ENCODE measurements at regions of chr4 and their contacts with region 1.

Region 1: DNA sequence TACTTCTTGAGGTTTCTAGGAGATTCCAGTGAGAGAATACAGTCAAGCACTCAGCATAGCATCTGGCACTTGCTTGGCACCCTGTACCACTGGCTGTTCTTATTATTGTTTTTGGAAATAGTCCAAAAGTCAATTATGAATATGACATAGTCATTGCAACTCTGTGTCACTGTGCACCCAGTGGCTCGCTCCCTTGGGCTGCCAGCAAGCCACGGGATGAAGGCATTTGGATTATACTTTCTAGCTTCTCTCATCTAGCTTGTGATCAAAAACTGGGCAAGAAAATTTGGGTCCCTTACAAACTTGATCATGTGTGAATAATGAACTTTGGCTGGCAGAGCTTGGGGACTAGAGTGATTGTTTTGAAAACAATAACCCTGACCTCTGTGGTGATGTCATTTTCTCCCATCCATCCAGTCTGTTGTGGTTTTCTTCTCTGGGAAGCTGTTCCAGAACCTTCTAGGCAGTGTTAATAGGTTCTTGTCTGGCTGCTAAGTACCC is 32.7 kb upstream of the LIMCH1 start:
- DNase-seq: peak; percentile 21 to 86
- H3K4me3 ChIP-seq: no peak overlapping the region
- H3K27ac ChIP-seq: peak overlapping the region; percentile 71 to 75
- H3K4me1 ChIP-seq: peaks cover 3 to 36% of the 10 kb centered on the region in 2 donors
- H3K27me3 ChIP-seq: no peaks in the 10 kb centered on the region
- CTCF ChIP-seq: no peak

Region 2: DNA sequence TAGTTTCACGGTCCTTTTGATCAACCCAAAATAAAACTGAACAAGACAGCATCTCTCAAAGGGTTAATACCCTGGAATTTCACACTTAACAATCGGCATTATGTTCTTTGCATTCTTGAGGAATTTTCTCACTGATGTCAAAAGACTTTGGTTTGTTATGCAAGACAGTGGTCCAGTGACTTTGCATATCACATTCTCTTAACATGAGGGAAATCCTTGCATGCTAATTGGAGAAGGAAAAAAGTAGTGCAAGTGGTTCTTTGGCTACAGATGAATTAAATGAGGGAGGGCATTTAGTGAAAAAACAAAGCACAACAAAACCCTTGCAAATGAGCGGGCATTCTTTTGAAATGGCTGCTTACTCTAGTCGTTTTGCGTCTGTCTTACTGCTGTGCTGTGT is 72.3 kb before region 1 on chr4:
- intact Hi-C with region 1: loop called (anchors 5 kb)
- DNase-seq: no peak
- H3K4me3 ChIP-seq: no peak overlapping the region
- H3K27ac ChIP-seq: peak overlapping the region; percentile 67 to 78
- H3K4me1 ChIP-seq: peaks cover 16 to 54% of the 10 kb centered on the region in 2 donors
- H3K27me3 ChIP-seq: no peaks in the 10 kb centered on the region
- CTCF ChIP-seq: no peak

Region 3: GRCh38 chr4:41471126-41472071 is 33.8 kb before region 1 on chr4:
- intact Hi-C with region 1: loop called (anchors 2 kb)
- DNase-seq: no peak
- H3K4me3 ChIP-seq: peak overlapping the region in 1 of 2 donors; percentile 18
- H3K27ac ChIP-seq: peak overlapping the region; percentile 70 to 80
- H3K4me1 ChIP-seq: peaks cover 2 to 37% of the 10 kb centered on the region in 2 donors
- H3K27me3 ChIP-seq: no peaks in the 10 kb centered on the region
- CTCF ChIP-seq: no peak

Measured in ascending aorta (tissue), 2 donors.